ENCODE measurements at regions of chr9 and their contacts with region 1.

Region 1: GRCh38 chr9:120928483-120929228 is 2.1 kb upstream of the TRAF1 start:
- DNase-seq: peak; percentile 75 to 82 (median 79)
- H3K4me3 ChIP-seq: peak overlapping the region; percentile 77 to 88
- H3K4me3 Mint-ChIP-seq: peak overlapping the region; percentile 83 to 97 (median 95)
- H3K27ac ChIP-seq: peak overlapping the region; percentile 99
- H3K27ac Mint-ChIP-seq: peak overlapping the region; percentile 91 to 99 (median 98)
- H3K4me1 ChIP-seq: peaks cover 84% of the 10 kb centered on the region
- H3K4me1 Mint-ChIP-seq: peaks cover 52 to 92% (median 69%) of the 10 kb centered on the region in 4 donors
- H3K27me3 ChIP-seq: no peaks in the 10 kb centered on the region
- H3K27me3 Mint-ChIP-seq: no peaks in the 10 kb centered on the region

Region 2: GRCh38 chr9:120892748-120893610 is 35.7 kb before region 1 on chr9:
- CTCF ChIA-PET with region 1: interaction called, 48 read pairs
- POLR2A ChIA-PET with region 1: interaction called, 5,577 read pairs
- intact Hi-C with region 1: loop called (anchors 1 kb)
- DNase-seq: peak; percentile 69 to 93 (median 75)
- H3K4me3 ChIP-seq: peak overlapping the region in 1 of 2 donors; percentile 41
- H3K4me3 Mint-ChIP-seq: peak overlapping the region; percentile 8 to 82 (median 68)
- H3K27ac ChIP-seq: peak overlapping the region; percentile 76
- H3K27ac Mint-ChIP-seq: peak overlapping the region; percentile 86 to 100 (median 98)
- H3K4me1 ChIP-seq: peaks cover 95% of the 10 kb centered on the region
- H3K4me1 Mint-ChIP-seq: peaks cover 49 to 92% (median 71%) of the 10 kb centered on the region in 4 donors
- H3K27me3 ChIP-seq: no peaks in the 10 kb centered on the region
- H3K27me3 Mint-ChIP-seq: no peaks in the 10 kb centered on the region

Region 3: GRCh38 chr9:120904061-120904977 is 24.3 kb before region 1 on chr9:
- CTCF ChIA-PET with region 1: interaction called, 12 read pairs
- POLR2A ChIA-PET with region 1: interaction called, 5,577 read pairs
- intact Hi-C with region 1: no loop called
- DNase-seq: peak; percentile 76 to 89 (median 80)
- H3K4me3 ChIP-seq: no peak overlapping the region
- H3K4me3 Mint-ChIP-seq: peak overlapping the region in 7 of 8 donors; percentile 55 to 75 (median 72)
- H3K27ac ChIP-seq: peak overlapping the region; percentile 79
- H3K27ac Mint-ChIP-seq: peak overlapping the region; percentile 93 to 99 (median 98)
- H3K4me1 ChIP-seq: peaks cover 91% of the 10 kb centered on the region
- H3K4me1 Mint-ChIP-seq: peaks cover 55 to 88% (median 71%) of the 10 kb centered on the region in 4 donors
- H3K27me3 ChIP-seq: no peaks in the 10 kb centered on the region
- H3K27me3 Mint-ChIP-seq: no peaks in the 10 kb centered on the region

Region 4: GRCh38 chr9:120909904-120910303 is 18.8 kb before region 1 on chr9:
- CTCF ChIA-PET with region 1: interaction called, 12 read pairs
- POLR2A ChIA-PET with region 1: interaction called, 5,577 read pairs
- intact Hi-C with region 1: loop called (anchors 2 kb)
- DNase-seq: peak in 1 of 5 donors; percentile 90
- H3K4me3 ChIP-seq: no peak overlapping the region
- H3K4me3 Mint-ChIP-seq: peak overlapping the region in 5 of 8 donors; percentile 17 to 55 (median 34)
- H3K27ac ChIP-seq: peak overlapping the region; percentile 70
- H3K27ac Mint-ChIP-seq: peak overlapping the region; percentile 53 to 88 (median 80)
- H3K4me1 ChIP-seq: peaks cover 85% of the 10 kb centered on the region
- H3K4me1 Mint-ChIP-seq: peaks cover 48 to 88% (median 71%) of the 10 kb centered on the region in 4 donors
- H3K27me3 ChIP-seq: no peaks in the 10 kb centered on the region
- H3K27me3 Mint-ChIP-seq: no peaks in the 10 kb centered on the region

Region 5: DNA sequence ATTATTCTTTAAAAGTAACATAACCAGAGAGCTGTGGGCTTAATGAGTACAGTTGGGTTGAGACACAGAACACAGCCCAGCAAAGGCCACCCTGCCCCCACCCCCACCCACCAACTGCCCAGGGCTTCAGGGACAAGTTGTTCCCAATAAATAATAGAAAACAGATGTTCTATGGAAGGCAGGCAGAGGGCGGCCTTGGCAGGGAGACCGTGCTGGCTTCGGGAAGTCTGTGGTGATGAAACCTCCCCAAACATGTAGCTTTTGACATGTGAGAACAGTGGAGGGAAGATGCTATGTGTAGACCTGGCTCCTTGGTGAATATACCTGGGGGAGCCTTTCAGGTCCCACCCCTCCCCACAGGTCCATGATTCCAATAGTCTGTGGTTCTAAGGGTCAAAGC is 12.1 kb before region 1 on chr9:
- CTCF ChIA-PET with region 1: interaction called, 17 read pairs
- POLR2A ChIA-PET with region 1: interaction called, 5,577 read pairs
- intact Hi-C with region 1: loop called (anchors 1 kb)
- DNase-seq: no peak
- H3K4me3 ChIP-seq: no peak overlapping the region
- H3K4me3 Mint-ChIP-seq: peak overlapping the region; percentile 2 to 84 (median 69)
- H3K27ac ChIP-seq: peak overlapping the region; percentile 50
- H3K27ac Mint-ChIP-seq: peak overlapping the region; percentile 78 to 96 (median 89)
- H3K4me1 ChIP-seq: peaks cover 92% of the 10 kb centered on the region
- H3K4me1 Mint-ChIP-seq: peaks cover 59 to 98% (median 79%) of the 10 kb centered on the region in 4 donors
- H3K27me3 ChIP-seq: no peaks in the 10 kb centered on the region
- H3K27me3 Mint-ChIP-seq: no peaks in the 10 kb centered on the region

Measured in CD4-positive, alpha-beta memory T cell (primary cell).